Common myeloid progenitor, CD34-positive (primary cell): ENCODE measurements at regions of chr2 and their contacts with region 1.

Region 1: DNA sequence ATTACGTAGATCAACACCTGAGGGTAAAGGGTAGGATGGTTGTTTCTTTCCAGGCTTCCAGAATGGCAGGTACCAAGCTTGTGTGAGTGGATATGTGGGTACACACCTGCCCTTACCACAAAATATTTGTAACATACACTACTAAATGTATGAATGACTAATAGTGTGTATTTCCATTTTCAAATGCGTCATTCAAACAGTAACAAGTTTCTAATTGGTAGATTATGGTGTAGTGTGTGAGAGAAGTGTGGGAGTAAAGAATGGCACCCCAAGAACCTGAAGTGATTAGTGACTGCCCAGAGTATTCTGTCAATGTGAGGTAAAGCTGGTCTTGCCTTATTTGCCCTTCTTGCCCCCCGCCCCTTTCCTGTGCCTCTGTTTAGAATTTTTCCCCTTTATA is 21.1 kb downstream of the AGPS start:
- DNase-seq: no peak
- H3K4me3 ChIP-seq: no peak overlapping the region
- H3K27ac ChIP-seq: no peak overlapping the region
- H3K4me1 ChIP-seq: peaks cover 0 to 17% (median 7%) of the 10 kb centered on the region in 4 experiments
- H3K27me3 ChIP-seq: no peaks in the 10 kb centered on the region

Region 2: GRCh38 chr2:176892676-176893226 is 521.0 kb before region 1 on chr2:
- CTCF ChIA-PET with region 1: no interaction called
- POLR2A ChIA-PET with region 1: no interaction called
- DNase-seq: no peak
- H3K4me3 ChIP-seq: no peak overlapping the region
- H3K27ac ChIP-seq: no peak overlapping the region
- H3K4me1 ChIP-seq: no peaks in the 10 kb centered on the region
- H3K27me3 ChIP-seq: no peaks in the 10 kb centered on the region

Region 3: GRCh38 chr2:177353187-177353478 is 60.6 kb before region 1 on chr2:
- CTCF ChIA-PET with region 1: interaction called, 42 read pairs
- POLR2A ChIA-PET with region 1: no interaction called
- DNase-seq: no peak
- H3K4me3 ChIP-seq: peak overlapping the region in 4 of 7 experiments; percentile 2 to 55 (median 30)
- H3K27ac ChIP-seq: peak overlapping the region; percentile 51 to 73
- H3K4me1 ChIP-seq: peaks cover 20 to 64% (median 51%) of the 10 kb centered on the region in 4 experiments
- H3K27me3 ChIP-seq: no peaks in the 10 kb centered on the region

Region 4: GRCh38 chr2:177573120-177573519 is 159.4 kb after region 1 on chr2:
- CTCF ChIA-PET with region 1: no interaction called
- POLR2A ChIA-PET with region 1: no interaction called
- DNase-seq: peak in 2 of 3 donors; percentile 6 to 10
- H3K4me3 ChIP-seq: no peak overlapping the region
- H3K27ac ChIP-seq: no peak overlapping the region
- H3K4me1 ChIP-seq: no peaks in the 10 kb centered on the region
- H3K27me3 ChIP-seq: no peaks in the 10 kb centered on the region